Left cardiac atrium (tissue), 4 donors: ENCODE measurements at regions of chr7 and their contacts with region 1.

Region 1: DNA sequence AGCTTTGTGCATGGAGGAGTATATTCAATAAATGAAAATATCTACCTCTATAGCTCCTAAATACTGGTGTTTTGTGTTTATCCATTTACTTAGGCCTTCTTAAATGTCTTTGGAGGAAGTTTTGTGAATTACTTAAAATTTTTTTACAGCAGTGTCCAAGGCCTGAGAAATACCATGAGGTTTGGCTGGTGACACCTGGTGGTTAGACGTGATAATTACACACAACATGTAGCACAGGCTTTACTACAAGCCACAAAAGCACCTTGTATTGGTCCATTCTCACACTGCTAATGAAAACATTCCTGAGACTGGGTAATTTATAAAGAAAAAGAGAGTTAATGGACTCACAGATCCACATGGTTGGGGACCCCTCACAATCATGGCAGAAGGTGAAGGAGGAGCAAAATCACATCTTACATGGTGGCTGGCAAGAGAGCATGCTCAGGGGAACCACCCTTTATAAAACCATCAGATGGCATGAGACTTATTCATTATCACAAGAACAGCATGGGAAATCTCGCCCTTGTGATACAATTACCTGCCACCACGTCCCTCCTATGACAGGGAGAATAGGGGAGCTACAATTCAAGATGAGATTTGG is 20.6 kb downstream of the HYAL4 start:
- DNase-seq: no peak
- ATAC-seq: peak; percentile 74 to 89

Region 2: GRCh38 chr7:123314886-123315285 is 550.7 kb before region 1 on chr7:
- intact Hi-C with region 1: no loop called
- DNase-seq: no peak
- ATAC-seq: no peak

Region 3: GRCh38 chr7:123570401-123571182 is 295.0 kb before region 1 on chr7:
- intact Hi-C with region 1: loop called in 1 of 2 experiments (anchors 5 kb)
- DNase-seq: no peak
- ATAC-seq: no peak

Region 4: GRCh38 chr7:123580406-123581161 is 285.0 kb before region 1 on chr7:
- intact Hi-C with region 1: loop called in 1 of 2 experiments (anchors 5 kb)
- DNase-seq: no peak
- ATAC-seq: peak; percentile 68 to 78

Region 5: DNA sequence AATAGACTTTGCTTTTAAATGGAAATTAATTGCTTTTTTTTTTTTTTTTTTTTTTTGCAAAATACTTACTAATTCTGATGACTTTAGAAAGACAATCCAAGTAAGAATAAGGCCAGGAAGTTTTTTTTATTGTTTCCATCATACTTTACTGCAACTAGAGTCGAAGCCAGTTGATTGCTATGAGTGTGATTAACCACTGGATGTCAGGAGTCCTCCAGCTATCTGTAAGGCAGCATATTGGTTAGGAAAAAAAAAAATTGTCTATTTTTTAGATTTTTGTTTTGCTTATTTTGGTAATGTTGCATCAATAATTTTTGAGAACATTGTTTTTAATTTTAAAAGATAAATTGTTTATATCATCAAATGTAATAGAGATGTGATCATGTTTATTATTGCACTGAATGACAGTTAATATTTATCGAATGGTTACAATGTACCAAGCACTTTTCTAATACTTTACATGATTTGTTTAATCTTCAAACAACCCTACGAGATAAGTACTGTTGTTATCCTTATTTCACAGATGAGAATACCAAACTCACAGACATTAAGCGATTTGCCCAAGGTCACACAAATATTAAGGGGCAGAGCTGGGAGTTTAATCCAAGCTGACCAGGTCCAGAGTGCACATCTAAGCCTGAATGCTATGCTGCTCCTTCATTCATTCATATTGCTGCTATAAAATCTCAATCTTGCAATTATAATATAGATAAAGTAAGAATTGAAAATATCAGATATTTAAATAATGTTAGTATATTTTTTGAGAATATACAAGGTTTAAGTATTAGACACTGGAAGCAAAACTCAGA is 229.9 kb before region 1 on chr7:
- intact Hi-C with region 1: loop called (anchors 2 to 10 kb)
- DNase-seq: no peak
- ATAC-seq: peak; percentile 63 to 66

Region 6: GRCh38 chr7:123682690-123683089 is 182.9 kb before region 1 on chr7:
- intact Hi-C with region 1: loop called (anchors 2 to 10 kb)
- DNase-seq: no peak
- ATAC-seq: peak; percentile 53 to 66

Region 7: DNA sequence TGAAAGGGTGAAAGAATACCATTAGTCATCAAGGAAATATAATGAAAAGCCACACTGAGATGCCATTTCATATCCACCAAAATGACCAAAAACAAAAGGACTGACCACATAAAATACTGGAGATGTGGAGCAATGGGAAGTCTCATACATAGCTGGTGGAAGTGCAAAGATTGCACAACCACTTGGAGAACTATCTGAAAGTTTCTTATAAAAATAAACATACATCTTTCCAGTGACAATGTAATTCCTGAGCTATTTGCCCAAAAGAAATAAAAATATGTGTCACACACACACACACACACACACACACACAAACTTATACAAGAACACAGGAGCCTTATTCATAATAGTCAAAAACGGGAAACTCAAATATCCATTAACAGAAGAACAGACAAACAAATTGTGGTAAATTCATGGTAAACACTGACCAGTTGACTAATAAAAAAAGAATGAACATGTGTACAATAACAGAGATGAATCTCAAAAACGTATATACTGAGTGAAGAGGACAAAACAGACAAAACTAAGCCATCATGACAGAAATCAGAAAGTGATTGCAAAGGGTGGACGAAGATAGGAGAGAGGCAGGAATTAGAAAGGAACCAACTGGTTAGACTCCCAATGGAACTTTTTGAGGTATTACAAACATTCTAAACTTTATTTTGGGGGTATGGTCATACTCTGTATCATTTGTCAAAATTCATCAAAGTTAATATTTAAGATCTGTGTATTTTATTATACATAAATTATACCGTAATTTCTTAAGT is 138.4 kb before region 1 on chr7:
- intact Hi-C with region 1: no loop called
- DNase-seq: no peak
- ATAC-seq: peak in 1 of 2 donors; percentile 38

Region 8: GRCh38 chr7:123797673-123798527 is 67.7 kb before region 1 on chr7:
- intact Hi-C with region 1: loop called (anchors 5 to 10 kb)
- DNase-seq: no peak
- ATAC-seq: peak; percentile 57 to 94